Activated CD4-positive, alpha-beta memory T cell treated with anti-CD3 and anti-CD28 coated beads for 36 hours (primary cell): ENCODE measurements at regions of chr20 and their contacts with region 1.

Region 1: DNA sequence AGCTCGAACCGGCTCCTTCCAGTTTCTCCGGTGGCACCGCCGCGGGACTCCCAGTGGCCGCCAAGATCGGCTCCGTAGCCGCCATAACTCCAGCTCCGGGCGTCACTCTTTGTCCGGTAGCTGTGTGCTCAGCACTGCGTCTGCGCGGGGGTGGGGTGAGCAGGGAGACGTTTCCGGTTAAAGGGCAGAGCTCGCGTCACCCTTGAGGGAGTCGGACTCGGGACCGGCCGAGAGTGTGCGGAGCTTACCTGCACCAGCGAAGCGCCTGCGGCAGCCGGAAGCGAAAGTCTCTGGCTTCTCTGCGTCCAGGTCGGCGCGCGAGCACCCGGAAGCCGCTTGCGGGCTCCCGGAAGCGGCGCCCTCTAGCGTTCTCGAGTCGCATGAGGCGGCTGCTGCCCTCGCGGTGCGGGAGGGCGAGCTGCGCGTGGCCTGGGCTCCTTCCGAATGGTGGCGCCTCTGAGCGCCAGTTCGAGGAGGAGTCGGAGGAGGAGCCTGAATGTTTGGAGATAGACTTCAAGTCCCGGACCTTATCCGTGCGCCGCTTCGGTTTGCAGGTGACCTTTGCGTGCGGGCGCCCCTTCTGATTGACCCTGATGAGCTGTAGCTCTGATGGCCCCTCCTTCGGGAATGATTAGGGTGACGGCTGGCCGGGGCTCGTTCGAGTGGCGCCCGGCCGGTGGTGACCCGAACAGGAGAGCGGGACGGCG is at the start of gene SCAND1:
- DNase-seq: peak; percentile 98
- H3K4me3 Mint-ChIP-seq: peak within 1 kb of the TSS; percentile 100
- H3K27ac Mint-ChIP-seq: peak within 1 kb of the TSS; percentile 99
- H3K4me1 Mint-ChIP-seq: peaks cover 14% of the 10 kb centered on the region
- H3K27me3 Mint-ChIP-seq: no peaks in the 10 kb centered on the region
- total RNA-seq, gene SCAND1: 45.4 to 51.3 TPM

Region 2: GRCh38 chr20:35490736-35491181 is 463.6 kb before region 1 on chr20:
- CTCF ChIA-PET with region 1: interaction called, 8 read pairs
- POLR2A ChIA-PET with region 1: interaction called, 11 read pairs
- intact Hi-C with region 1: no loop called
- DNase-seq: peak; percentile 78
- H3K4me3 Mint-ChIP-seq: peak overlapping the region; percentile 99
- H3K27ac Mint-ChIP-seq: peak overlapping the region; percentile 99
- H3K4me1 Mint-ChIP-seq: peaks cover 39% of the 10 kb centered on the region
- H3K27me3 Mint-ChIP-seq: no peaks in the 10 kb centered on the region

Region 3: GRCh38 chr20:35601008-35601973 is 353.1 kb before region 1 on chr20:
- CTCF ChIA-PET with region 1: interaction called, 6 read pairs
- POLR2A ChIA-PET with region 1: no interaction called
- intact Hi-C with region 1: loop called (anchors 5 kb)
- DNase-seq: peak; percentile 89
- H3K4me3 Mint-ChIP-seq: peak overlapping the region; percentile 67
- H3K27ac Mint-ChIP-seq: no peak overlapping the region
- H3K4me1 Mint-ChIP-seq: peaks cover 9% of the 10 kb centered on the region
- H3K27me3 Mint-ChIP-seq: peaks cover 18% of the 10 kb centered on the region

Region 4: DNA sequence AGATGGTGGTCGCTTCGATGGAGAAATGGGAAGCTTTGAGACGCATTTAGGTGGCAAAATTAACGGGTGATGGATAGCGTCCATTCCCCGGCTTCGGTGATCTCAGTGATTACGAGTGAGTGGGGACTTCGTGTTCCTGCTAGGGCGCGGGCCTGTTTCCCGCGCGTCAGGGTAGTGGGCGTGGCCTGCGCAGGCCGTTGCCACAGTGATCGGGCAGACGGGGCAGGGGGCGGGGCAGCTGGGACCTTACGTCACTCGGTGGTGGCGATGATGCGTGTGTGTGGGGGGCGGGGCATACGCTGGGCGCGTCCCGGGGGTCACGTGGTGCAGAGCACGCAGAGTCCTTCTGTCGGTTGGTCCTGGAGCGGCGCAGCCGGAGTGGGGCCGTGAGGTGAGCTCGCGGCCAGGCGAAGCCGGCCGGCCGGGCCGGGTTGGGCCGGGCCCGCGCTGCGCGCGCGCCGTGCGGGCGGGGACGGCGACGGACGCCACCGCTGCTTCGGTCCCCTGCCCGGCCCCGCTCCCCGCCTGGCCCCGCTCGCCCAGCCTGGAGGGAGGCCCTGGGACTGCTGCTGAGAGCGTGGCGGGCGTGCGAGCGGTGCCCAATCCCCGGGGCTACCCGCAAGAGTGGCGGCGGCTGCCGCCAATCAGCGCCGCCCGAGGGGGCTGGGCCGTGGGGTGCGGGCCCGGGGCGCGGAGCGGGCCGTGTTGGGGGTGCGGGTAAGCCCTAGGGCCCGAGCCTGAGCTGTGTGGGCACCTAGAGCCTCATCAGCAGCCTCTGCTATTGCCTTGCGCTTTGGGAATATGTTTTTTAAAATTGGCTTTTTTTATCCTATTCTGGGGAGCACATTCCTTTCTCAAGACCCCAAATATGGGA is 182.4 kb before region 1 on chr20 and contains the start of gene PHF20:
- CTCF ChIA-PET with region 1: interaction called, 10 read pairs
- POLR2A ChIA-PET with region 1: interaction called, 13 read pairs
- intact Hi-C with region 1: no loop called
- DNase-seq: peak; percentile 100
- H3K4me3 Mint-ChIP-seq: peak within 1 kb of the TSS; percentile 82
- H3K27ac Mint-ChIP-seq: peak within 1 kb of the TSS; percentile 85
- H3K4me1 Mint-ChIP-seq: peaks cover 64% of the 10 kb centered on the region
- H3K27me3 Mint-ChIP-seq: no peaks in the 10 kb centered on the region
- total RNA-seq, gene PHF20: 49.1 to 50.5 TPM

Region 5: GRCh38 chr20:35942243-35942642 is 12.1 kb before region 1 on chr20:
- CTCF ChIA-PET with region 1: interaction called, 13 read pairs
- POLR2A ChIA-PET with region 1: interaction called, 4 read pairs
- intact Hi-C with region 1: no loop called
- DNase-seq: no peak
- H3K4me3 Mint-ChIP-seq: no peak overlapping the region
- H3K27ac Mint-ChIP-seq: no peak overlapping the region
- H3K4me1 Mint-ChIP-seq: no peaks in the 10 kb centered on the region
- H3K27me3 Mint-ChIP-seq: no peaks in the 10 kb centered on the region

Region 6: DNA sequence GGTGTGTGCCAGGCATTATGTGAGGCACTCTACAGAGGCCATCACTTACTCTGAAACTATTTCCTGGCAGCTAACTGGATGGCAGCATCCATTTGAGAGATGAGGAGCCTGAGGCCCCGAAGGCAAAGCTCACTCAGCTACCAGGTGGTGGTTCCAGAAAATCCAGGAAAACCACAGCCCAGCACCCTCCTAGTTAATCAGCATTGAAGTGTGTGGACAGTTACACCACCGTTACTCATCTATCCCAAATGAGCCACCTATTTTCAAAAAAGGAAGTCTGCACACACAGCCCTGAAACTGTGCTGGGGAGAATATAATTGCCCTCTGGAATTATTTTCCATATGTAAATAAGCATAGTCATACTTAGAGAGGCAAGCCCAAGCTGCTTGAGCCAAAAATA is 81.4 kb after region 1 on chr20:
- CTCF ChIA-PET with region 1: no interaction called
- POLR2A ChIA-PET with region 1: no interaction called
- intact Hi-C with region 1: no loop called
- DNase-seq: no peak
- H3K4me3 Mint-ChIP-seq: no peak overlapping the region
- H3K27ac Mint-ChIP-seq: no peak overlapping the region
- H3K4me1 Mint-ChIP-seq: no peaks in the 10 kb centered on the region
- H3K27me3 Mint-ChIP-seq: no peaks in the 10 kb centered on the region